ENCODE measurements at regions of chr11 and their contacts with region 1.

Region 1: GRCh38 chr11:72179804-72180396 is 12.0 kb upstream of the FOLR1 start:
- DNase-seq: no peak
- H3K4me3 ChIP-seq: no peak overlapping the region
- CTCF ChIP-seq: no peak

Region 2: DNA sequence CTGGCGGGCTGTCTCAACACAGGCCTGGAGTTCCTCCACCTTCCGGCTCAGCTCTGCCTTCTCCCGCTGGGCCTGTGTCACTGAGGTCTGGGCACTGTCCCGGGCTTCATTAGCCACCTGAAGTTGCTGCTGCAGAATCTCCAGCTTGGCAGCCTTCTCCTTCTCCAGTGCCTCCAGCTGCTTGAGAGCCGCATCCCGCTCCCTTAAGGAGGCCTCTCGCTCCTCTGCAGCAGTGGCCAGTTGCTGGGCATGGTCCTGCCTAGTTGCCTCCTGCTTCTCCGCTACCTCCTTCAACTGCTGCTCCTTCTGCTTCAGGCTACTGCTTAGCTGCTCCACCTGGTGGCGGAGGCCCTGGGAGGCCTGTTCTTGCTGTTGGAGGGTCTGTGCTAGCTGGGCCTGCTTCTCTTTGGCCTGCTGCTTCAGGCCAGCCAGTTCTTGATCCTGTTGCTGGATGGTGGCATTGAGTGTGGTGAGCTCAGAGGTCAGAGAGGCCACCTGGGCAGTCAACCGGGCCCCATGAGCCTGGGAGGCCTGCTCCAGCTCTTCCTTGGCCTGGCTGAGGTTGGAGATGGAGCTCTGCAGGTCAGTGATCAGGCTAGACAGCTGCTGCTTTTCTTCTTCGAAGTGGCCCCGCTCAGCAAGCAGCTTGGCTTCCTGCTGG is 164.3 kb before region 1 on chr11:
- CTCF ChIA-PET with region 1: interaction called, 13 read pairs
- POLR2A ChIA-PET with region 1: no interaction called
- DNase-seq: no peak
- H3K4me3 ChIP-seq: no peak overlapping the region
- CTCF ChIP-seq: peak; percentile 58

Region 3: GRCh38 chr11:72040726-72041441 is 139.0 kb before region 1 on chr11:
- CTCF ChIA-PET with region 1: interaction called, 231 read pairs
- POLR2A ChIA-PET with region 1: no interaction called
- DNase-seq: peak; percentile 77
- H3K4me3 ChIP-seq: peak overlapping the region; percentile 63
- CTCF ChIP-seq: no peak

Region 4: DNA sequence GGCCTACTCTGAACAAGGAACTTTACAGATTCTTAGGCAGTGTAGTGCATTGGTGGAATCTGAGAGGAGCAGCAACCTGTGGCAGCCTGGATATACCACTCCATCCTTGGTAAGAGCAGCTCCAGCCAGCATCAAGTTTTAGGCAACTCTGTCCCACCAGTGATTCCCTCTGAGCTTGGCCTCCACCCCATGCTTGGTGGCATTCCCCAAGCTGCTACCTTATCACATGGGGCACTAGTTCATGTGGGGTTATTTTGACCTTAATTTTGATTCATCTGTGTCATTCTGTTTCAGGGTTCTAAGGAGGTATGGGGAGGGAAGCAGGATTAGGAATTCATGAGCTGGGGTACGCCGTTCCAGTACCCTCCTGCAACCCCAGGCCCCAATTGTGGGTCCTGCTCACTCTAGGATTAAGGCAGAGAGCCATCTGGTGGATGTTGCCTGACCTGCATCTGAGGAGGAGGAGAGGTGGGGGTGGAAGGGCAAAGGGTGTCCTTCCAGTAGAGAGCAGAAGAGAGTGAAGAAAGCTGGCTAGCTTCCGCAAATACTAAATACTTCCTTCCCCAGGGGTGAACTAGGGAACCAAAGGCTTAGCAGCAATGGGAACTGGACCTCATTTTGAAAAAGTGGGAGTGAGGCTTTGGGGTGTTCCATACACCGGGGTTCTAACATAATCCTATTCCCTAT is 88.8 kb before region 1 on chr11:
- CTCF ChIA-PET with region 1: interaction called, 18 read pairs
- POLR2A ChIA-PET with region 1: no interaction called
- DNase-seq: no peak
- H3K4me3 ChIP-seq: no peak overlapping the region
- CTCF ChIP-seq: peak; percentile 91

Region 5: GRCh38 chr11:72102946-72103753 is 76.8 kb before region 1 on chr11 and contains the start of gene LAMTOR1:
- CTCF ChIA-PET with region 1: interaction called, 20 read pairs
- POLR2A ChIA-PET with region 1: no interaction called
- DNase-seq: peak; percentile 91
- H3K4me3 ChIP-seq: peak within 1 kb of the TSS; percentile 78
- CTCF ChIP-seq: peak; percentile 40

Region 6: DNA sequence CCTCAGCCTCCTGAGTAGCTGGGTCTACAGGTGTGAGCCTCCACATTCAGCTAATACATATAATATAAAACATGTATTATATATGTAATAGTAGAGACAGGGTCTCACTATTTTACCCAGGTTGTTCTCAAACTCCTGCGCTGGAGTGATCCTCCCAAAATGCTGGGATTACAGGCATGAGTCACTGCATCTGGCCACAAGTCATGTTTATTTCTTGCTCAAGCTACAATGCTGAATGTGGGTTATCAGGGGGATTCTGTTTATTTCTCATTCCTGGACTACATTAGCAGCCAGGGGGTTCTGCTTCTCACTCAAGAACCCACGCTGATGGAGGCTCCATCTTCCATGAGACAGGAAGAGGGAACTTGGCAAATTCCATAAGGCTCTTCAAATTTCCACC is 19.6 kb before region 1 on chr11:
- CTCF ChIA-PET with region 1: interaction called, 24 read pairs
- POLR2A ChIA-PET with region 1: no interaction called
- DNase-seq: no peak
- H3K4me3 ChIP-seq: no peak overlapping the region
- CTCF ChIP-seq: no peak

Measured in AG04449 (cell line).